A673 (cell line): ENCODE measurements at regions of chr4 and their contacts with region 1.

Region 1: DNA sequence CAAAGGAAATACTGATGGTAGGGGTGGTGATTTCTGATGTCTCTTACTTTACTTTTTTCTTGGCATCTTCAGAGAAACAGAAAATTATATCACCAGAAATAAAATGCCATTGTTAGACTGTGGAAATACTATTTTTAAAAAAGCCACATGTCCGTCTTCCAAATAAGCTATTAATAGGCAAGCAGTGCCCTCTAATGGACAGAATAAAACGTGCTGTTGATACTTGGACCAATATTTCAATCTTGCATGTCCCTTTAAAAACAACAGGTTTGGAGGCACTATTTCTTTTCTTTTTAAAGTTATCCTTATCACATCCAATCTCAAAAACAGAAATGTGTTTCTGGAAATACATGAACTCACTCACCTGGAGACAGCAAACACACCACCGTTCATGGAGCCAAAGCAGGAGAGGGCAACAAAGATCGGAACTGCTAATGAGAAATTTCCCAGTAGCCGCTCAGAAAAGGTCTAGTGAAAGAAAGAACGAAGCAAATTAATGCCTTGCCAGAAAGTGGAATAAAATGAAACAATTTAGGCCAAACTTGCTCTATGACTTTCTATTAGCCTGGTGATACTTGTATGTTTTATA is 59.2 kb downstream of the SLC7A11 start:
- DNase-seq: peak; percentile 63
- H3K4me3 ChIP-seq: no peak overlapping the region
- H3K27ac ChIP-seq: no peak overlapping the region
- H3K4me1 ChIP-seq: peaks cover 31% of the 10 kb centered on the region
- H3K27me3 ChIP-seq: no peaks in the 10 kb centered on the region
- CTCF ChIP-seq: peak; percentile 74

Region 2: GRCh38 chr4:137819964-137820383 is 363.0 kb before region 1 on chr4:
- CTCF ChIA-PET with region 1: no interaction called
- POLR2A ChIA-PET with region 1: no interaction called
- intact Hi-C with region 1: loop called (anchors 2 kb)
- DNase-seq: peak; percentile 65
- H3K4me3 ChIP-seq: no peak overlapping the region
- H3K27ac ChIP-seq: no peak overlapping the region
- H3K4me1 ChIP-seq: no peaks in the 10 kb centered on the region
- H3K27me3 ChIP-seq: no peaks in the 10 kb centered on the region
- CTCF ChIP-seq: peak; percentile 77

Region 3: GRCh38 chr4:138053641-138054301 is 129.2 kb before region 1 on chr4:
- CTCF ChIA-PET with region 1: no interaction called
- POLR2A ChIA-PET with region 1: no interaction called
- intact Hi-C with region 1: no loop called
- DNase-seq: peak; percentile 53
- H3K4me3 ChIP-seq: no peak overlapping the region
- H3K27ac ChIP-seq: no peak overlapping the region
- H3K4me1 ChIP-seq: no peaks in the 10 kb centered on the region
- H3K27me3 ChIP-seq: no peaks in the 10 kb centered on the region
- CTCF ChIP-seq: no peak

Region 4: DNA sequence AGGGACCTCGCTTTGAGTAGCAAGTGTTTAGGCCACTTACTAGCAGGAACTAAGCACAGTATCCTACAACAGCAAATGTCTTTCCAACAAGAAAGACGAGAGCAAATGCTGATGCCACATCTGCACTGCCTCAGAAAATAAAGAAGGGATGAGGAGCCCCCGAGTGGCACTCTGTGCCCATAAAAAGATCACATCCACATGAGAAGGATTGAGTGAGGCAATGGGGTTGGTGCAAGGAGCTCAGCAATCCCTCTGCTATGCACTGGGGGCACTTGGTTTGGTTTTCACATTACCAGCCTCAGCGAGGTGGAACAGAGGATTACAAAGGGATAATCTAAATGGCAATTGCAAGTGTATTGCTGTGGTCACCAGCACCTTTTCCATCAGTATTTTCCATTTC is 312.0 kb after region 1 on chr4:
- CTCF ChIA-PET with region 1: interaction called, 4 read pairs
- POLR2A ChIA-PET with region 1: no interaction called
- intact Hi-C with region 1: loop called (anchors 10 kb)
- DNase-seq: peak; percentile 86
- H3K4me3 ChIP-seq: no peak overlapping the region
- H3K27ac ChIP-seq: no peak overlapping the region
- H3K4me1 ChIP-seq: peaks cover 14% of the 10 kb centered on the region
- H3K27me3 ChIP-seq: no peaks in the 10 kb centered on the region
- CTCF ChIP-seq: peak; percentile 61

Region 5: DNA sequence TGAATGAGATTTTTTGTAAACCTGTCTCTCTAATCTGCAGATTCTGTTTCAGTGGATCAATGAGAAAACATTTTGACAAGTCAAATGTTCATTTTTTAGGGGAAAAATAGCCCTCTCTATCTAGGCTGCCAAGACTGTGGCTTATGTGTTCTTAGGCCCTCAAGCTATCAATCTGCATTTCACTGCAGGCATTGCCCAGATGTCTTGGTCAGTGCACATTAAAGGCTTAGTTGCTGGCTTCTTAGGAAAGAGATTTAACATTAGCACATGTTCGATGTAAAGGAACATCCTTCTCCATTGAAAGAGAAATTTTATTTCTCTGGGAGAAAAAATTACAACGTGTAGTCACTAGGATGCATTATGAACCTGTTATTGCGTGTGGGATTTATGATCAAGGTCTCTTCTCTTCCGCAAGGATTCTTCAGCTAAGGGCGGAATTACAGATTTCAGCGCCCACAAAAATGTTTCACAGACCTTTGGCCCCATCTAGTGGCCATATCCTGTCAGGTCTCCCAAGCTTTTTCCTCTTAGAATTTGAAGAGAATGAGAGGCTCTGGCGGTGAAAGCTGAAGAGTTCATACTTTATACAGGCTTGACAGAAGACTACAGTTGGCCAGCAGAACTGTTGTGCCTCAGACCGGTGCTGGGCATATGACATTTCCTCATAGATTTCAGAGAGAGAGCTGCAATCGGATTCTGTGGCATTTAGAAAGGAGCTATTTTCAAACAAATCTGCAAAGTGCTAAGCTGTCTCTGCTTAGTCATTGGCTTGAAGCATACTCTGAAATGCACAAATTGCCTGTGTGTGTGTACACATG is 688.0 kb after region 1 on chr4:
- CTCF ChIA-PET with region 1: interaction called, 13 read pairs
- POLR2A ChIA-PET with region 1: no interaction called
- intact Hi-C with region 1: no loop called
- DNase-seq: peak; percentile 85
- H3K4me3 ChIP-seq: no peak overlapping the region
- H3K27ac ChIP-seq: no peak overlapping the region
- H3K4me1 ChIP-seq: no peaks in the 10 kb centered on the region
- H3K27me3 ChIP-seq: no peaks in the 10 kb centered on the region
- CTCF ChIP-seq: peak; percentile 88